Ovary (tissue), 10 donors: ENCODE measurements at regions of chr3 and their contacts with region 1.

Region 1: DNA sequence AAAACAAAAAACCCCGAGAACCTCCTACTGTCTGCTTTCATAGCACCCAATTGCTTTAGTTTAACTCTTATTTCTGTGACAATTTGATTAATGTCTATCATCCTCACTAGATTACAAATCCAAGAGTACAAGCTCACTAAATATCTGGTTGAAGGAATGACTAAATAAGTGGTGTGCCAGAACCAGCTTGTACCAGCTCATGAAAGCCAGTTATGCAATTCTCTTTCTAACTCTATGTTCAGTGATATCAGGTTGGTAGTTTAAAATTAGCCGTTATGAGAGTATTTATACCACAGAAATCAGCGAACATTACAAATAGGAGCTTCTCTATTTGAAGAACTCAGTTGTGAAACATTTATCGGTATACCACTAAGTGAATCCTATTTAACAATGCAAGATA is 137.2 kb upstream of the MITF start:
- DNase-seq: no peak
- H3K4me3 ChIP-seq: no peak overlapping the region
- H3K27ac ChIP-seq: no peak overlapping the region
- H3K4me1 ChIP-seq: no peaks in the 10 kb centered on the region
- H3K27me3 ChIP-seq: no peaks in the 10 kb centered on the region
- CTCF ChIP-seq: no peak
- EP300 ChIP-seq: no peak
- POLR2A ChIP-seq: no peak

Region 2: GRCh38 chr3:70360979-70361760 is 759.1 kb after region 1 on chr3:
- intact Hi-C with region 1: loop called in 1 of 4 experiments (anchors 5 kb)
- DNase-seq: no peak
- H3K4me3 ChIP-seq: no peak overlapping the region
- H3K27ac ChIP-seq: no peak overlapping the region
- H3K4me1 ChIP-seq: no peaks in the 10 kb centered on the region
- H3K27me3 ChIP-seq: no peaks in the 10 kb centered on the region
- CTCF ChIP-seq: no peak
- EP300 ChIP-seq: no peak
- POLR2A ChIP-seq: no peak